AG04449 (cell line): ENCODE measurements at regions of chr17 and their contacts with region 1.

Region 1: DNA sequence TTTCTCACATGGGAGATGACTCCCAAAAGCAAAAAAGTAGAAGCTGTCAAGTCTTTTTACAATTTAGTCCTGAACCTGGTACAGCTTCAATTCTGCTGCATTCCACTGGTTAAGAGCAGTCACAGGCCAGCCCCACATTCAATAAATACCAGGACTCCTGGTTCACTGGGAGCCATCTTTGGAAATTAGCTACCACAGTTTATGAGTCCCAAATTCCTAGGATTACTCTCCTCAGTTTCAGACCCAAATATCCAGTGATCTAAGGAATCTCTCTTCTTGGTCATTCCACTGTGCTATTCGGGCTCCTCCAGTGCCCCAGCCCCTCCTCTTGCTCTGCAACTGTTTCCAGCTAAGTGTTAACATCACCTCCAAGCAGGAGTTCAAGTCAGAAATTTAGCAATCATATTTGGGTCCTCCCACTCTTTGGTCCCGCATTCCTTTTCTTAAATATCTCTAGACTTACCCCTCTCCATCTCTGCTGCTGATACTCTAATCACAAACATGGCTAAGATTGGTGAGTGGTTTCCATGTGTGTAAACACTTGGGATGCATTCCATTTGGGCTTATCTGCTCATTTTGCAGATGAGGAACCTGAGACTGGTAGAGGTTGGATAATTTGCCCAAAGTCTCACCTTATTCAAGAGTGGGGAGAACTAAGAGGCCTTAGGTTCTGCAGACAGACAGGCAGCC is 9.6 kb upstream of the WIPF2 start:
- DNase-seq: peak; percentile 69
- H3K4me3 ChIP-seq: no peak overlapping the region
- CTCF ChIP-seq: no peak

Region 2: DNA sequence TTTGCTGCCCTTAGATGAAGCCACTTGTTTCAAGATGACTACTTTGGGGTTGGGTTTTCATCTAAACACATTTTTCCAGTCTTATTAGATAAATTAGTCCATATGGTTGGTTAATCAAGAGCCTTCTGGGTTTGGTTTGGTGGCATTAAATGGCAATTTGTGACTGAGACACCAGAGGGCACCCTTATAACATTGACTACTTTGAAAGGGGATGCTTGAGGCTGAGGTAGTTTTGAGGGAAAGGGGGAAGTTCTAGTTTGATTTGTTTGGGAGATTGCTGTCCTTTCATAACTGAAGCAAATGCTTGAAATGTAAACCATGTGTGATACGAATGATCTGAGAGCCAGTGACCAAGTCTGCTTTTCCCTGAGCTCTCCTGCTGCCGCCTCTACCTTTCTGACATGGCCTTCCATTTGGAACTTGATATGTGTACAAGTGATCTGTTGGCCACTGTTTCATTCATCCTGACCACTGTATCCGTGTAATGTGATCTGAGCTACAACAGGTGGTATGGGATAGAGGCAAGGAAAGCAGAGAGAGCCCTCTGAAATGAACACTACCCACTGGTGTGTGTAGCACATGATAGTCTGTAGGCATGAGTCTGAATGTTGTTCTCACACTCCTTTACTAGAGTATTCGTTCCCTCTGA is 93.6 kb after region 1 on chr17:
- CTCF ChIA-PET with region 1: interaction called, 290 read pairs
- POLR2A ChIA-PET with region 1: interaction called, 4 read pairs
- DNase-seq: no peak
- H3K4me3 ChIP-seq: no peak overlapping the region
- CTCF ChIP-seq: peak; percentile 58